GM10248 (cell line): ENCODE measurements at regions of chr1 and their contacts with region 1.

Region 1: DNA sequence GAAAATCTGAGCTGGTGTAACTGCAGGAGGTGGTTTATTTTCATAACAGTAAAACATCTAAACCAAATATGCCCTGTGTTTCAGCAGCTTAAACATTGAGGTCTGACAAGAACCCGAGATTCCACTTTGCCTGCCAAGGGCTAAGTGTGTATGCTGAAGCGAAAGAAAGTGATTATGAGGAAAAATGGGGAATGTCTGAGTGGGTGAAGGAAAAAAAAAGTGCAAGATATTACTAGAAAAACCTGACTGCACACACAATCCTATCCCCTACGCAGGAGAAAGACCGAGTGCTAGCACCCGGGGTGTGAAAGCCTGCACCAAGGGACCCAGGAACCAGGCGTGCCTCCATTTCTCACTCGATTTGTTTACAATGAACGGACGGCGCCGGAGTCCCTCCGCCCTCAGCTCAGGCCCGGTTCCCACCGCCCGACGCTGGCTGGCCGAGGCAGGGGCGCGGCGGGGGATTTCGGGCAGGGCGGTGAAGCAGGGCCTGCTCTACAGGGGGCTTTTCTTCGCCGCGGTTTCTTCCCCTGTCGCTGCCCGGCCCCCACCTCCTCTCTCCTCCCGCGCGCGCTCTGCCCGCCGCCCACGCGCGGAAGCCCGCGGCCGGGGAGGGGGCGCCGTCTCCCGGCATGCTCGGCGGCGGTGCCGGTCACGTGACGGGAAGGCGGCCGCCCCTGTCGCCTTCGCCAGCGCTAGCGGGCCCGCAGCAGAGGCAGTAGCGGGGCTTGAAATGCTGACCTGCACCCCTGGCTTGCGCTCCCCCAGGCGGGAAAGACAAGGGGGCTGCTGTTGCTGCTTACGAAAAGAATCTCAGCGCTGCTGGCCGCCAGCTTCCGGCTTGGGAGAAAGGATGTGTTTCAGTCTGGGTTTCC is 35.9 kb downstream of the ITPKB start:
- DNase-seq: peak; percentile 92
- CTCF ChIP-seq: no peak

Region 2: DNA sequence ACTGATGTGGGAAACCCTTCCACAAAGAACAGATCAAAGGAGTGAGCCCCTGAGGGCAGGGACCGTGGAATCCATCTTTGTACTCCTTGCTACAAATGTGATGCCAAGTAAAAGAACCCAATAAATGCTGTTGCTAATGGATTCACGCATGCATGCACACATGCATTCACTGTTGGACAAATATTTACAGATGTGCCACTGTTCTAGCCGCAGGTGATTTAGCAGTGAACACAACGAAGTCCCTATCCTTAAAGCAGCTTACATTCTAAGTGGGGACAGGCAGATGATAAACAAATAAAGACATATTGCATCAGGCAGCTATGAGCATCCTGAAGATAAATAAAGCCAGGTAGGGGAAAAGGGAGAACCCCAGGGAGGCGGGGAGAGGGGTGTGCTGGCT is 31.9 kb before region 1 on chr1:
- CTCF ChIA-PET with region 1: interaction called, 12 read pairs
- POLR2A ChIA-PET with region 1: no interaction called
- DNase-seq: no peak
- CTCF ChIP-seq: no peak

Region 3: DNA sequence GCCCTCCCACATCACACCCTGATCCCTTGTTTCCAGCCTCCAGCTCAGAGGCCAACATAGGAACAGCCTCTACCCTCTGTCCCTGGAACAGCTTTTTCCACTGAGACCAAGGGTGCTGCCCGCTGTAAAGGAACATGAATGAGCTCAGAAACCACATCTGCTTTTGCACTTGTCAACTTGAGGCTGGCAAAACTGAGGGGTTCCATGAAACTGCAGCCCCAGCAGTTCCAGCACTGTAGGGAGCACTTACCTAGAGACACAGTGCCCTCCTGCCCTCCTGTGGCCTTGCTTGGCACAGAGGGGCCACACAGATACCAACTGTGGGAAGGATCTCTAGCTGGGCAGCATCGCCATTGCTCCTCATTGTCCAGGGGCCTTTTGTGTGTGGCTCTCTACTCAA is 15.8 kb before region 1 on chr1:
- CTCF ChIA-PET with region 1: interaction called, 10 read pairs
- POLR2A ChIA-PET with region 1: interaction called, 3 read pairs
- DNase-seq: no peak
- CTCF ChIP-seq: no peak